Activated CD4-positive, alpha-beta T cell treated with anti-CD3 and anti-CD28 coated beads for 36 hours (primary cell): ENCODE measurements at regions of chrX and their contacts with region 1.

Region 1: GRCh38 chrX:155026726-155027508 is at the start of gene FUNDC2:
- DNase-seq: peak; percentile 94
- ATAC-seq: peak; percentile 86
- H3K4me3 Mint-ChIP-seq: peak within 1 kb of the TSS; percentile 86
- H3K27ac Mint-ChIP-seq: peak within 1 kb of the TSS; percentile 93
- H3K4me1 Mint-ChIP-seq: peaks cover 21% of the 10 kb centered on the region
- H3K27me3 Mint-ChIP-seq: no peaks in the 10 kb centered on the region
- total RNA-seq, gene FUNDC2: 83.7 to 86.9 TPM

Region 2: GRCh38 chrX:154804957-154805695 is 221.8 kb before region 1 on chrX and contains the start of gene MPP1:
- CTCF ChIA-PET with region 1: no interaction called
- POLR2A ChIA-PET with region 1: no interaction called
- intact Hi-C with region 1: loop called in 1 of 2 experiments (anchors 10 kb)
- DNase-seq: peak; percentile 82
- ATAC-seq: peak; percentile 81
- H3K4me3 Mint-ChIP-seq: peak within 1 kb of the TSS; percentile 78
- H3K27ac Mint-ChIP-seq: peak within 1 kb of the TSS; percentile 80
- H3K4me1 Mint-ChIP-seq: peaks cover 38% of the 10 kb centered on the region
- H3K27me3 Mint-ChIP-seq: no peaks in the 10 kb centered on the region
- total RNA-seq, gene MPP1: 24.1 to 27.6 TPM

Region 3: DNA sequence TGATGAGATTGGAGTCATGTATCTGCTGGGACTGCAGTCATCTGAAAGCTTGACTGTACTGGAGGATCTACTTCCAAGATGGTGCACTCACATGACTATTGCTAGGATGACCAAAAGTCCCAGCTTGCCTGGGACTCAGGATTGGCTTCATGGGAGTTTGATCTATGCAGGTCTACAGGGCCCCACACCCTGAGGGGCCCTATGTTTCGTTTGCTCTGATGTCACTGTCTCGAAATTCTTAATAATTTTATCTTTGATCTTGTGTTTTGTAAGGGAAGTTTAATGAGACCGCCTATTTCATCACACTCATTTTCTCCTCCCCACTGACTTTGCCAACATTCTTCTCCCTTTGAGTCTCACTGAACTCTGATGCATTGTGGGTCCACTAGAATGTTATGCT is 192.3 kb before region 1 on chrX and contains the start of gene SMIM9:
- CTCF ChIA-PET with region 1: no interaction called
- POLR2A ChIA-PET with region 1: no interaction called
- intact Hi-C with region 1: no loop called
- DNase-seq: no peak
- ATAC-seq: no peak
- H3K4me3 Mint-ChIP-seq: no peak within 1 kb of the TSS
- H3K27ac Mint-ChIP-seq: no peak within 1 kb of the TSS
- H3K4me1 Mint-ChIP-seq: peaks cover 4% of the 10 kb centered on the region
- H3K27me3 Mint-ChIP-seq: no peaks in the 10 kb centered on the region
- total RNA-seq, gene SMIM9: not detected

Region 4: GRCh38 chrX:154986826-154987576 is 39.9 kb before region 1 on chrX:
- CTCF ChIA-PET with region 1: no interaction called
- POLR2A ChIA-PET with region 1: no interaction called
- intact Hi-C with region 1: loop called (anchors 1 to 5 kb)
- DNase-seq: no peak
- ATAC-seq: no peak
- H3K4me3 Mint-ChIP-seq: no peak overlapping the region
- H3K27ac Mint-ChIP-seq: no peak overlapping the region
- H3K4me1 Mint-ChIP-seq: peaks cover 19% of the 10 kb centered on the region
- H3K27me3 Mint-ChIP-seq: peaks cover 3% of the 10 kb centered on the region

Region 5: GRCh38 chrX:155056877-155057792 is 30.2 kb after region 1 on chrX:
- CTCF ChIA-PET with region 1: interaction called, 3 read pairs
- POLR2A ChIA-PET with region 1: no interaction called
- intact Hi-C with region 1: loop called in 1 of 2 experiments (anchors 2 kb)
- DNase-seq: peak; percentile 63
- ATAC-seq: peak; percentile 82
- H3K4me3 Mint-ChIP-seq: peak overlapping the region; percentile 21
- H3K27ac Mint-ChIP-seq: peak overlapping the region; percentile 25
- H3K4me1 Mint-ChIP-seq: peaks cover 33% of the 10 kb centered on the region
- H3K27me3 Mint-ChIP-seq: no peaks in the 10 kb centered on the region

Region 6: DNA sequence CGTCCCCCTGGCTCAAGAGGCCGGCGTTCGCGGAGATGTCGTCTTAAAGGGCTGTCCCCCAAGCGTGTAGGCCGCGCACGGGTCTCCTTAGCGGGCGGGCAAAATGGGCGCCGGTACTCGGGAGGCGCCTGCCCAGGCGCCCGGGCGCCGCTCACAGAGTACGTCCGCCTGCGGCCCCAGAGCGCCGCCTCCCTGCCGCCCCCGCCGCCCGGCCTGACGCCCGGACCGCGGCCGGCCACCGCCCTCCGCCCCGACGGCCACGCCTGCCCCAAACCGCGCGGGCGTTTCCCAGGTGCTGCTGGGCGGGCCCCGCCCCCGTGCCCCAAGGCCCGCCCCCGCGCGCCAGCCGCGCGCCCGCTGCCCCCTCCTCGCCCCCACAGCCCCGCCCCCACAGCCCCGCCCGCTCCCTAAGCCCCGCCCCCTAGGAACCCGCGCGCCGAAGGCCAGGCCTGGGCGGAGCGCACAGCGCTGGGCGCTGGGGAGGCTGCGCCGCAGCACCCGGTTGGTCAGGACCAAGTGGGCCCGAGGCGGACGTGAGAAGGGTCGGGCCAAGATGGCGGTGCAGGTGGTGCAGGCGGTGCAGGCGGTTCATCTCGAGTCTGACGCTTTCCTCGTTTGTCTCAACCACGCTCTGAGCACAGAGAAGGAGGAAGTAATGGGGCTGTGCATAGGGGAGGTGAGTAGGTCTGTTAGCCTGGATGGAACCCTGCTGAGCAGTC is 44.2 kb after region 1 on chrX and contains the starts of genes BRCC3, CMC4 and MTCP1:
- CTCF ChIA-PET with region 1: no interaction called
- POLR2A ChIA-PET with region 1: no interaction called
- intact Hi-C with region 1: loop called (anchors 1 to 5 kb)
- DNase-seq: peak; percentile 87
- ATAC-seq: peak; percentile 93
- H3K4me3 Mint-ChIP-seq: peak within 1 kb of the TSS; percentile 90
- H3K27ac Mint-ChIP-seq: peak within 1 kb of the TSS; percentile 93
- H3K4me1 Mint-ChIP-seq: peaks cover 53% of the 10 kb centered on the region
- H3K27me3 Mint-ChIP-seq: no peaks in the 10 kb centered on the region
- total RNA-seq, gene BRCC3: 28.1 to 30.3 TPM
- total RNA-seq, gene CMC4: 3.8 to 7.6 TPM
- total RNA-seq, gene MTCP1: 9.3 to 18.1 TPM

Region 7: DNA sequence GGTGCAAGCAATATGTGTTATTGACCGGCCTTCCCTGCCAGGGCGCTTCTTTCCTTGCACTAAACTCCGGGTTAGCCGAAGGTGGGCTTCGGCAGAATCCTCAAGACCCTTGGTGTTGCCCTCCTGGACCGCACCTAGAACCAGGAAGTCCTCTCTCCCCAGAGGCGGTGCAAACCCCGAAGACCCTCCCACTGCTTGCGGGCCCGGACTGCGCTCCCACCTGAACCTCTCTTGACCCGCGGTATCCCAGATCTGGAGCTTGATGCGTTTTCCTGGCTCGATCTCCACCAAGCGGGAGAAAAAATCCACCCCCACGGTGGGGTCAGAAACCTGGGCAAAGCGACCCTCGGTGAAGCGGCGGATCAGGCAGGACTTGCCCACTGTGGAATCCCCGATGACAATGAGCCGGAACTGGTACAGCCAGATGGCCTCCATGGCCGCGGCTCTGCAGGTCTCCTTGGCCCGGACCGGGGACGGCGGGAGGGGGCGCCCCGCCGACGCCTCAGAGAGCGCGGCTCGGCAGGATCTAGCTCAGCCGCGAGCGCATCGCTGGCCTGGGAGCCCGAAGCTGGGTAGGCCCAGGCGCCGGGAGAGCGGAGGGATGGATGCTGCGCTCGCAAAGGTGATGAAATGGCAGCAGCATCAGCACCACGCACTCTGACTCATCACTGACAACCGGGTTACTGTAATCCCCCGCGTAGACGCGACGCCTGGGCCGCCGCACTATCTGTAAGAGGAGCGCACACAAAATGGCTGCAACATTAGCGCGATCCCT is 237.1 kb after region 1 on chrX and contains the start of gene RAB39B:
- CTCF ChIA-PET with region 1: no interaction called
- POLR2A ChIA-PET with region 1: no interaction called
- intact Hi-C with region 1: loop called in 1 of 2 experiments (anchors 5 kb)
- DNase-seq: peak; percentile 88
- ATAC-seq: peak; percentile 90
- H3K4me3 Mint-ChIP-seq: peak within 1 kb of the TSS; percentile 89
- H3K27ac Mint-ChIP-seq: peak within 1 kb of the TSS; percentile 94
- H3K4me1 Mint-ChIP-seq: peaks cover 21% of the 10 kb centered on the region
- H3K27me3 Mint-ChIP-seq: no peaks in the 10 kb centered on the region
- total RNA-seq, gene RAB39B: 16.4 to 17.2 TPM

Region 8: DNA sequence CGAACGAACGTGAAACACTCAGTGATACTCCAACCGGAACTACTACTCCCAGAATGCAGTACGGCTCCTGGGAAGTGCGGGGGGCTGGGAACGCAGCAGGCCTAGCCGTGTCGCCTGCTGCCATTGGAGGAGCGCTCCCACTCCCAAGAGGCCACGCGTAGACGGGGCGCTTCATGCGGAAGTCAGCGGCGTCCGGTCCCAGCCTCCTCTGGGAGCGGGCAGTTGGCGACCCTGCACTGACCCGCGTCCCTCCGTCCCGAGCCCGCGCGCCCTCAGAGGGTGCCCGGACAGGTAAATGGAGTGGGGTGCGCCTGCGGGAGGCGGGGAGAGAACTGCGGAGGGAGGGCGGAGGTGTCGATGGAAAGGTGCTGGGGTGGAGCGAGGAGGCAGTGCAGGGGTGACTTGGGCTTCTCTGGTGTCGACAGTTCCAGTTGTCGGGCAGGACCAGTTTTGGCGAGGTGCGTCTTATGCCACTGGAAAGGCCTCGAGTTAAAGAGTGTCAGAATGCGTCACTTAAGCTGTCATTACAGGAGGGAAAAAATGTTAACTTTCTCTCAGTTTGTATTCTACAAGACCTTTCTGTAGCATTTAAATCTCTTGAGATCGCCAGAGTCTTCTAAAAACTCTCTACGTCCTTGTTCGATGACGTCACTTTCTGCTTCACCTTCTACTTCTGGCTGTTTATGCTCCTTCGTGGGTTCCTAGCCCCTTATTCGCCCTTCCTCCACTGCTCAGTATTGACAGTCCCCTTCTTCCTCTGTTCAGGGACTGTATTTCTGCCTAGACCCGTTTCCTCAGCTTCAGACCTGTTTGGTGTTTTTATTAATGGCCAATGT is 854.5 kb after region 1 on chrX and contains the start of gene VAMP7:
- CTCF ChIA-PET with region 1: no interaction called
- POLR2A ChIA-PET with region 1: no interaction called
- intact Hi-C with region 1: loop called in 1 of 2 experiments (anchors 2 kb)
- DNase-seq: peak; percentile 89
- ATAC-seq: peak; percentile 99
- H3K4me3 Mint-ChIP-seq: peak within 1 kb of the TSS; percentile 90
- H3K27ac Mint-ChIP-seq: peak within 1 kb of the TSS; percentile 88
- H3K4me1 Mint-ChIP-seq: peaks cover 25% of the 10 kb centered on the region
- H3K27me3 Mint-ChIP-seq: no peaks in the 10 kb centered on the region
- total RNA-seq, gene VAMP7: 34.9 to 37.2 TPM